ENCODE measurements at regions of chr22 and their contacts with region 1.

Region 1: DNA sequence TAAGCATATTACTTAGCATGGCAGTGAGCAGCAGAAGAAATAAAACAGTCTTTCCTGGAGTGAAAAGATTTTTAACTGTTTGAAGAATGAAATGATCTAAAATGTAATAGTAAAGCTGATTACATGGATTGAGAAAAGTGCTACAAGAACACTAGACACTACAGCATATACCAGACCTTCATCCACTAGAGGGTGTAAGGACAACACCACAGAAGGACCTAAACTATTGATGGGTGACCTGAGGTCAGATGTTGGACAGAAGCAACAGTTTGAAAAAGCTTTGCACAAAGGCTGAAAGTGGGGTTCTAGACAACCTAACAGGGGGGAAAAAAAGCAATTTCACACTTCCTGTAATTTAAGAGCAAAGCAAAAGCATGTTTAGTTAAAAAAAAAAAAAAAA is 97.7 kb downstream of the RBFOX2 start:
- DNase-seq: no peak
- ATAC-seq: peak; percentile 95

Region 2: GRCh38 chr22:36036167-36036624 is 105.3 kb after region 1 on chr22:
- intact Hi-C with region 1: loop called (anchors 10 kb)
- DNase-seq: no peak
- ATAC-seq: no peak

Region 3: DNA sequence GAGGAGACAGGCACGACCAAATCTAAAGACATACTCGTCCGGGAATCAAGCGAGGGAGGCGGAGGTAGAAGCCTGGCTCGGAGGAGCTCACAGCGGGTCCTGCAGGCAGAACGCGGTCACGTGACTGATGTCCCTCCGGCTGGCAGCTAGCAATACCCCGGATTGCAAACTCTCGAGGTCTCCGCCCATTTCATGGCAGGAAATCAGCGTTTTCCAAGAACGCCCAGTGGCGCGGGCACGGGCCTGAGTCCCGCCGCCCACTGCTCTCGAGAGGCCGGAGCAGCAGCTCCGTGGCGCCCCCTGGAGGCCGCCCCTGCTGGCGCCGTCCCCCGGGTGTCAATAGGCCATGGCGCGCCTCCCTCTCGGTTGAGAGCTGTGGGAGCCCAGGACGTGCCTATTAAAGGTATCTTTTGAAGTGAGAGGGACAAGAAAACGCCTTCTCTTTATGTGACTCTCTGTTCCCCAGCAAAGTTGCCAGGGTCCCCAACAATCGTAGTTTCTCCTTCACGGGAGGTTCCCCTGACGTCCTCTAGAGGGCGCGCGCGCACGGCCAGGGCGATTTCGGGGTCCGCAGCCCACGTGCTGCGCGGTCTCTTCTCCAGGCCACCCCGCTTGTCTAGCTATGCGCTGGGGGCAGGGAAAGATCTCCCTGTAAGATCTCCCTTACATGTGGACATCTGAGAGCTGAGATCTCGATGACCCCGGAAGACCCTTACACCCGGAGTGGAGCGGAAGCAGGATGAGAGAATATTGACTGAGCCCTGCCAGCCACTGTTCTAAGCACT is 135.0 kb after region 1 on chr22:
- intact Hi-C with region 1: loop called (anchors 5 kb)
- DNase-seq: peak; percentile 92
- ATAC-seq: peak; percentile 94

Region 4: GRCh38 chr22:36088292-36088691 is 157.4 kb after region 1 on chr22:
- intact Hi-C with region 1: no loop called
- DNase-seq: no peak
- ATAC-seq: no peak

Region 5: GRCh38 chr22:36123673-36124630 is 193.0 kb after region 1 on chr22:
- intact Hi-C with region 1: loop called (anchors 5 kb)
- DNase-seq: peak; percentile 97
- ATAC-seq: peak; percentile 99

Measured in Right ventricle myocardium superior (tissue), 1 donor.